Heart right ventricle (tissue), 16 donors: ENCODE measurements at regions of chr3 and their contacts with region 1.

Region 1: DNA sequence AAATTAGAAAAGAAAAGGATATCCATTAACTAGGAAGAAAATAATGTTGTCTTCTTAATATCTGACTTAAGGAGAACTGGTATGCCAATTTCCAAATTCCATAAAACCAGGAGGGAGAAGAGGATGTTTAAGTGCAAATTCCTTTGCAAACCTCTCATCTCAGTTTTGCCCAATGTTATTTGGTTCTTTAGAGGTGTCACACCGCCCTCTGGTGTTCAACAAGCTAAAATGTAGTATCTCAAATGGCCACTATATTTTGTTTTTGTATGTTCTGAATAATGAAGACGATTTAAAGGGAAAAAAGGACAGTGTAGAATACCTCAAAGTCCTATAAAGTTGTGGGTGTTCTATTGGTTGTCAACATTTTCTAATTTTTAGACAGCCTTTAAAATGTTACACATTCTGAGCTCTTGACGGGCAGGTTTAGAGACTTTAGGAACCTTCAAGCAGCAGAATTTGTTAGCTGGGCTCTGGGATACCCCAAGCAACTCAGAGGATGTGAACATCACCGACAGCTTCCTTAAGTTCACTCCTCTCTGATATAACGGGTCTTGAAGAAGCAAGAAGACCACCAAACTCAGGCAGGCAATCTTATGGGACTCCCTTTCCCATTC is 458.3 kb downstream of the MFSD1 start:
- DNase-seq: peak in 1 of 2 donors; percentile 30
- ATAC-seq: peak in 4 of 8 donors; percentile 51 to 64 (median 58)
- H3K4me3 ChIP-seq: no peak overlapping the region
- H3K27ac ChIP-seq: no peak overlapping the region
- H3K4me1 ChIP-seq: no peaks in the 10 kb centered on the region
- H3K27me3 ChIP-seq: peaks cover 0 to 6% (median 0%) of the 10 kb centered on the region in 7 donors
- CTCF ChIP-seq: peak; percentile 37 to 82 (median 73)

Region 2: DNA sequence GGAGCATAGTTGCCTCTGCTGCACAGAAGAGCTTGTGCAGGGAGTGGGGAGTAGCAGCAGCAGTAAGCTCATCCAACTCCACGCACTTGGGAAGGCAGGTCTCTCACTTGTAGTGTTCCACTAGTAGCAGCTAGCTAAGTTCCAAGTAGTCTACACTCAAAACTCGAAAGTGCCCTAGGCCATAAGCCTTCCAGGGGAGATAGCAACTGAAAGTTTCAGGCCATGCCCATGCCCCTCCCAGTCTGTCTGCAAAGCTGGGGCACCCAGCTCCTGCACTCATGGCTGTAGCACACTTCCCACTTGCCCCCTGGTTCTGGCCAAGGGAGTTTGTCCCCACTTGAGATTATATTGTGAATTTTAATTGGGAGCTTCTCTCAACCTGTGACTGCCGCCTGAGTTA is 400.8 kb before region 1 on chr3:
- intact Hi-C with region 1: loop called in 1 of 10 experiments (anchors 5 kb)
- DNase-seq: no peak
- ATAC-seq: no peak
- H3K4me3 ChIP-seq: no peak overlapping the region
- H3K27ac ChIP-seq: no peak overlapping the region
- H3K4me1 ChIP-seq: no peaks in the 10 kb centered on the region
- H3K27me3 ChIP-seq: no peaks in the 10 kb centered on the region
- CTCF ChIP-seq: no peak

Region 3: DNA sequence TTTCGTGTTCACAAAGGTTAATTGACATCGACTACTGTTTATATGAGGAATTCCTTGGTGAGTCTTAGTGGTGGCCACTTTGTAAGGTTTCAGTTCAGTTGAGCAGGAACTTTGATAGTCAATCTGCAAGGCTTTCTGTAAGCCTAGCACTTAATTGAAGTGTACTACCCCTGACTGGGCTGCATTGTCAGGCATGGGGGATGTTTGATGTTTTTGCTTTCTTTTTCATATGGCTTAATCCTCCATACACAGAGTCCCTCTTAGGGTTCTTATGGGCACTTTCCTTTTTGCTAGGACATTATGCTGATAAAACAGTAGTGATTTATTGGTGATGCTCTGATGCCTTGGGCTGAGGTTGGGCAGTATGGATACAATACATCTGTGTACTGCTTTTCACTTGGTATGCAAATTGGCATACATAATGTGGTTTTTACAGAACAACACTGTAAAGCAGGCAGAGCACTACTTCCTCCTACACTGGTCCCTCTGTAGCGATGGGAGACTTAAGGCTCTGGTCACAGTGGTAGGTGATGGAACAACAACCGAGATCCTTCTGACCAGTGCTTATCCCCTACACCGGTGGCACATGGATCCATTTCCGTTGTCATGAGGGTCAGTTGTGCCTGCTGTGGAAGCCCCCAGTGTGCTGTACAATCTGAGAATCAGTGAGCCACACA is 197.3 kb before region 1 on chr3:
- intact Hi-C with region 1: no loop called
- DNase-seq: no peak
- ATAC-seq: no peak
- H3K4me3 ChIP-seq: no peak overlapping the region
- H3K27ac ChIP-seq: no peak overlapping the region
- H3K4me1 ChIP-seq: peaks cover 0 to 6% (median 0%) of the 10 kb centered on the region in 9 donors
- H3K27me3 ChIP-seq: no peaks in the 10 kb centered on the region
- CTCF ChIP-seq: no peak

Region 4: GRCh38 chr3:159158213-159158612 is 101.9 kb before region 1 on chr3:
- intact Hi-C with region 1: no loop called
- DNase-seq: no peak
- ATAC-seq: no peak
- H3K4me3 ChIP-seq: no peak overlapping the region
- H3K27ac ChIP-seq: no peak overlapping the region
- H3K4me1 ChIP-seq: peaks cover 0 to 4% (median 0%) of the 10 kb centered on the region in 9 donors
- H3K27me3 ChIP-seq: no peaks in the 10 kb centered on the region
- CTCF ChIP-seq: no peak

Region 5: GRCh38 chr3:159346271-159346903 is 86.2 kb after region 1 on chr3:
- intact Hi-C with region 1: no loop called
- DNase-seq: no peak
- ATAC-seq: no peak
- H3K4me3 ChIP-seq: no peak overlapping the region
- H3K27ac ChIP-seq: no peak overlapping the region
- H3K4me1 ChIP-seq: no peaks in the 10 kb centered on the region
- H3K27me3 ChIP-seq: no peaks in the 10 kb centered on the region
- CTCF ChIP-seq: no peak

Region 6: GRCh38 chr3:159586571-159587202 is 326.5 kb after region 1 on chr3:
- intact Hi-C with region 1: loop called in 3 of 10 experiments (anchors 10 kb)
- DNase-seq: no peak
- ATAC-seq: peak in 1 of 8 donors; percentile 47
- H3K4me3 ChIP-seq: no peak overlapping the region
- H3K27ac ChIP-seq: no peak overlapping the region
- H3K4me1 ChIP-seq: no peaks in the 10 kb centered on the region
- H3K27me3 ChIP-seq: no peaks in the 10 kb centered on the region
- CTCF ChIP-seq: peak in 7 of 9 donors; percentile 35 to 59 (median 52)

Region 7: GRCh38 chr3:159711560-159712333 is 451.6 kb after region 1 on chr3:
- intact Hi-C with region 1: no loop called
- DNase-seq: peak in 1 of 2 donors; percentile 78
- ATAC-seq: peak; percentile 87 to 100 (median 98)
- H3K4me3 ChIP-seq: no peak overlapping the region
- H3K27ac ChIP-seq: peak overlapping the region in 9 of 10 donors; percentile 53 to 82 (median 71)
- H3K4me1 ChIP-seq: peaks cover 0 to 20% (median 12%) of the 10 kb centered on the region in 9 donors
- H3K27me3 ChIP-seq: no peaks in the 10 kb centered on the region
- CTCF ChIP-seq: no peak

Region 8: DNA sequence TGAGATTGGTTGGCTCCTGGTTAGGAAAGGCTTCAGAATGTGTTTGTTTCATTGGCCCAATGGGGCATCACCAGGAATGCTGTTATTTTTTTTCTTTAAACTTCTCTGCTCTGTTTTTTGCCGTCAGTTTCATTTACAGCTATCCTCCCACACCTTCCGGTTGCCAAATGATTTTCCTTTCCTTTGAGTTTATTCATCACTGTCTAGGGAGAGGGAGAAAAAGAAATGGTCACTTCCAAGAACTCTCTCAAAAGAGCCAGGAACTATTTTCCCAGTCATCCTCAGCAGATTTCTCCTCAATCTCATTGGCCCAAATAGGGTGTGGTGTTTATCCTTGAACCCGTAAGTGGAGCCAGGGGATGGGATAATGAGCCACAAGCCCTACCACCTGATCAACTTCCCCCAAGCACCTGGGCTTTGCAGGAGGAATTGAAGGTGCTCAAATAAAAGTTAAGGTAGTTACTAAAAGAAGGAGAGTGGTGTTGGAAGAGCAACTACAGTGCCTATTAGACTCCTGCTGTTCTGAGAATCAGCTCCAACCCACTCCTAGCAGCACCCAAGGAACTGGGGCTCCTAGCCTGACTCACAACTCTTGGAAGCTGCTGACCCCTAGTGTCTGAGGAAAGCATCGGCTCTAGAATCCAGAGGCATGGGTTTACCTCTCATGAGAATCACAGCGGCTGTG is 544.7 kb after region 1 on chr3:
- intact Hi-C with region 1: loop called in 9 of 10 experiments (anchors 2 to 10 kb)
- DNase-seq: peak in 1 of 2 donors; percentile 82
- ATAC-seq: peak; percentile 88 to 94 (median 92)
- H3K4me3 ChIP-seq: peak overlapping the region in 1 of 10 donors; percentile 4
- H3K27ac ChIP-seq: peak overlapping the region in 8 of 10 donors; percentile 42 to 74 (median 64)
- H3K4me1 ChIP-seq: peaks cover 8 to 79% (median 57%) of the 10 kb centered on the region in 9 donors
- H3K27me3 ChIP-seq: no peaks in the 10 kb centered on the region
- CTCF ChIP-seq: peak; percentile 80 to 94 (median 86)